Activated CD8-positive, alpha-beta T cell treated with anti-CD3 and anti-CD28 coated beads for 36 hours (primary cell): ENCODE measurements at regions of chr17 and their contacts with region 1.

Region 1: GRCh38 chr17:30104575-30105339 is 11.9 kb upstream of the NSRP1 start:
- DNase-seq: peak; percentile 83
- ATAC-seq: peak; percentile 98
- H3K4me3 Mint-ChIP-seq: peak overlapping the region; percentile 71
- H3K27ac Mint-ChIP-seq: no peak overlapping the region
- H3K4me1 Mint-ChIP-seq: peaks cover 4% of the 10 kb centered on the region
- H3K27me3 Mint-ChIP-seq: peaks cover 2% of the 10 kb centered on the region
- CTCF ChIP-seq: peak; percentile 91

Region 2: GRCh38 chr17:30116661-30117551 is 12.1 kb after region 1 on chr17 and contains the start of gene NSRP1:
- CTCF ChIA-PET with region 1: interaction called, 41 read pairs
- POLR2A ChIA-PET with region 1: interaction called, 6 read pairs
- intact Hi-C with region 1: no loop called
- DNase-seq: peak; percentile 97
- ATAC-seq: peak; percentile 92
- H3K4me3 Mint-ChIP-seq: peak within 1 kb of the TSS; percentile 98
- H3K27ac Mint-ChIP-seq: peak within 1 kb of the TSS; percentile 98
- H3K4me1 Mint-ChIP-seq: peaks cover 46% of the 10 kb centered on the region
- H3K27me3 Mint-ChIP-seq: no peaks in the 10 kb centered on the region
- CTCF ChIP-seq: no peak
- total RNA-seq, gene NSRP1: 24.3 to 28.4 TPM

Region 3: GRCh38 chr17:30155389-30155788 is 50.6 kb after region 1 on chr17:
- CTCF ChIA-PET with region 1: no interaction called
- POLR2A ChIA-PET with region 1: no interaction called
- intact Hi-C with region 1: no loop called
- DNase-seq: no peak
- ATAC-seq: no peak
- H3K4me3 Mint-ChIP-seq: no peak overlapping the region
- H3K27ac Mint-ChIP-seq: no peak overlapping the region
- H3K4me1 Mint-ChIP-seq: peaks cover 26% of the 10 kb centered on the region
- H3K27me3 Mint-ChIP-seq: no peaks in the 10 kb centered on the region
- CTCF ChIP-seq: no peak

Region 4: GRCh38 chr17:30236766-30237165 is 132.0 kb after region 1 on chr17:
- CTCF ChIA-PET with region 1: interaction called, 17 read pairs
- POLR2A ChIA-PET with region 1: no interaction called
- intact Hi-C with region 1: no loop called
- DNase-seq: peak; percentile 29
- ATAC-seq: no peak
- H3K4me3 Mint-ChIP-seq: no peak overlapping the region
- H3K27ac Mint-ChIP-seq: no peak overlapping the region
- H3K4me1 Mint-ChIP-seq: peaks cover 21% of the 10 kb centered on the region
- H3K27me3 Mint-ChIP-seq: peaks cover 57% of the 10 kb centered on the region
- CTCF ChIP-seq: no peak

Region 5: GRCh38 chr17:30323895-30324319 is 219.2 kb after region 1 on chr17:
- CTCF ChIA-PET with region 1: interaction called, 22 read pairs
- POLR2A ChIA-PET with region 1: interaction called, 3 read pairs
- intact Hi-C with region 1: no loop called
- DNase-seq: peak; percentile 59
- ATAC-seq: peak; percentile 92
- H3K4me3 Mint-ChIP-seq: no peak overlapping the region
- H3K27ac Mint-ChIP-seq: peak overlapping the region; percentile 56
- H3K4me1 Mint-ChIP-seq: peaks cover 24% of the 10 kb centered on the region
- H3K27me3 Mint-ChIP-seq: no peaks in the 10 kb centered on the region
- CTCF ChIP-seq: no peak

Region 6: GRCh38 chr17:30344283-30345088 is 239.7 kb after region 1 on chr17:
- CTCF ChIA-PET with region 1: interaction called, 34 read pairs
- POLR2A ChIA-PET with region 1: no interaction called
- intact Hi-C with region 1: loop called (anchors 5 kb)
- DNase-seq: no peak
- ATAC-seq: no peak
- H3K4me3 Mint-ChIP-seq: no peak overlapping the region
- H3K27ac Mint-ChIP-seq: no peak overlapping the region
- H3K4me1 Mint-ChIP-seq: peaks cover 19% of the 10 kb centered on the region
- H3K27me3 Mint-ChIP-seq: no peaks in the 10 kb centered on the region
- CTCF ChIP-seq: no peak

Region 7: DNA sequence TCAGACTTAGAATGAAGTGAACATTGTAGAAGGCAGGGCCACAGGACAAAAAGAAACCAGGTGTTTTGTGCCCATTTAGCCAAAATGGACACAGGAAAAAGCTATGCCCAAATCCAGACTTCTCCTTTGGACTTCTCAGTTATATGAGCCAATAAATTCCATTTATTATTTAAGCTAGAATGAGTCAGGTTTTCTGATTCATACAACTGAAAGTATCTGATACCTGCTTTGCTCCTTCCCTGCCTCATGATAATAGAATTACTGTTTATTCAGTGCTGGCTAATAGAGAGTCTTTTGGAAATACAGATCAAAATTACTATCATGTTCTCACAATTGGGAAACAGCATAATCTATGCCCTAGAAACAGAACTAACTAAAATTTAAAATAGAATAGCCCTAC is 265.2 kb after region 1 on chr17:
- CTCF ChIA-PET with region 1: no interaction called
- POLR2A ChIA-PET with region 1: no interaction called
- intact Hi-C with region 1: no loop called
- DNase-seq: no peak
- ATAC-seq: no peak
- H3K4me3 Mint-ChIP-seq: no peak overlapping the region
- H3K27ac Mint-ChIP-seq: no peak overlapping the region
- H3K4me1 Mint-ChIP-seq: peaks cover 56% of the 10 kb centered on the region
- H3K27me3 Mint-ChIP-seq: no peaks in the 10 kb centered on the region
- CTCF ChIP-seq: no peak